ENCODE measurements at regions of chr1 and their contacts with region 1.

Region 1: GRCh38 chr1:209860293-209860881 is 32.6 kb downstream of the UTP25 start:
- DNase-seq: peak; percentile 56 to 82 (median 73)
- ATAC-seq: peak; percentile 47 to 84 (median 76)
- H3K4me3 ChIP-seq: no peak overlapping the region
- H3K27ac ChIP-seq: no peak overlapping the region
- H3K4me1 ChIP-seq: no peaks in the 10 kb centered on the region
- H3K27me3 ChIP-seq: peaks cover 0 to 38% (median 10%) of the 10 kb centered on the region in 9 donors
- CTCF ChIP-seq: peak; percentile 79 to 93 (median 88)
- POLR2A ChIP-seq: no peak

Region 2: DNA sequence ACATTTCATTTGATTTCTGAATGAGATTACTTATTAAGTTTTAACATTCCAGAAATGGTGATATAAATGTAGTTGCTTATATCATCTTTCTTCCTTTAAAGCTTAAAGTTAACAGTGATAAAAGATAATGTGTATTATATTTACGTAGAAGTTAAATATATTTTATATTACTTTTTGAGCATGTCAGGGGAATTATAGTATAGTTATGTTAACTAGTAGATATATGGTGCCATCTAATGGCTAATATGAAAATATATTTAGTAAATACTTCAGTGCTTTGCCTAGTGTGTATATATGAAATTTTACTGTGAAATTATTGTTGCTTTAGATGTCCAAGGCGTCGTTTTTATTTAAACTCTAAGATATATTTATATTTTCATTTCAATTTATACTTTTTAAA is 129.1 kb after region 1 on chr1:
- intact Hi-C with region 1: loop called (anchors 1 to 5 kb)
- DNase-seq: no peak
- ATAC-seq: no peak
- H3K4me3 ChIP-seq: no peak overlapping the region
- H3K27ac ChIP-seq: no peak overlapping the region
- H3K4me1 ChIP-seq: no peaks in the 10 kb centered on the region
- H3K27me3 ChIP-seq: peaks cover 0 to 17% (median 0%) of the 10 kb centered on the region in 9 donors
- CTCF ChIP-seq: peak in 11 of 12 donors; percentile 9 to 49 (median 34)
- POLR2A ChIP-seq: no peak

Region 3: DNA sequence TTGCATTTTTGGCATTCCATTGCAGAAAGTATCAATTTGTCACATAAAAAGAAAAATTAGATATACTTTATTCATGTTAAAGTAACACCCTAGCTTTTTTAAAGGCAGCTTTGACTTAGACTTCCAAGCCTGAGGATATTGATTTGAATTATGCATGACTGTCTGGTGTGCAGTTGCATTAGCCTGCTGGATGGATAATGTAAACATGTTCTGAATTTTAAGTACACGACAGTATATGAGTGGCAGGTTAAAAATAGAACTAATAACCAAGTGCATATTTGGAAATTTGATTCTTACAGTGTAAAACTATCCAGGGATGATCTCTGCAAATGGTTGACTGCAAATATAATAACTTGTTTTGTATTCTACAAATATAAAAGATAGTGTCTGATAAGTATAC is 201.6 kb after region 1 on chr1:
- intact Hi-C with region 1: no loop called
- DNase-seq: no peak
- ATAC-seq: no peak
- H3K4me3 ChIP-seq: no peak overlapping the region
- H3K27ac ChIP-seq: no peak overlapping the region
- H3K4me1 ChIP-seq: no peaks in the 10 kb centered on the region
- H3K27me3 ChIP-seq: peaks cover 0 to 3% (median 0%) of the 10 kb centered on the region in 9 donors
- CTCF ChIP-seq: no peak
- POLR2A ChIP-seq: no peak

Region 4: GRCh38 chr1:210301615-210302000 is 441.2 kb after region 1 on chr1:
- intact Hi-C with region 1: loop called in 1 of 10 experiments (anchors 10 kb)
- DNase-seq: no peak
- ATAC-seq: peak in 2 of 4 donors; percentile 26 to 62
- H3K4me3 ChIP-seq: no peak overlapping the region
- H3K27ac ChIP-seq: no peak overlapping the region
- H3K4me1 ChIP-seq: peaks cover 0 to 41% (median 0%) of the 10 kb centered on the region in 12 donors
- H3K27me3 ChIP-seq: peaks cover 0 to 3% (median 0%) of the 10 kb centered on the region in 9 donors
- CTCF ChIP-seq: no peak
- POLR2A ChIP-seq: no peak

Measured in heart left ventricle (tissue), 16 donors.